ENCODE measurements at regions of chrX and their contacts with region 1.

Region 1: GRCh38 chrX:14039344-14039743 is 9.7 kb upstream of the GEMIN8 start:
- DNase-seq: peak; percentile 47 to 73 (median 51)
- ATAC-seq: peak; percentile 84
- H3K4me3 ChIP-seq: no peak overlapping the region
- H3K27ac ChIP-seq: no peak overlapping the region
- H3K4me1 ChIP-seq: no peaks in the 10 kb centered on the region; a peak in 1 of 5 replicates
- H3K27me3 ChIP-seq: peaks cover 0 to 5% of the 10 kb centered on the region in 2 experiments; a peak in 1 of 5 replicates
- CTCF ChIP-seq: peak; percentile 43 to 78 (median 44); a peak in 5 of 6 replicates
- EP300 ChIP-seq: peak; percentile 93
- POLR2A ChIP-seq: no peak
- RAD21 ChIP-seq: peak; percentile 85 to 94

Region 2: DNA sequence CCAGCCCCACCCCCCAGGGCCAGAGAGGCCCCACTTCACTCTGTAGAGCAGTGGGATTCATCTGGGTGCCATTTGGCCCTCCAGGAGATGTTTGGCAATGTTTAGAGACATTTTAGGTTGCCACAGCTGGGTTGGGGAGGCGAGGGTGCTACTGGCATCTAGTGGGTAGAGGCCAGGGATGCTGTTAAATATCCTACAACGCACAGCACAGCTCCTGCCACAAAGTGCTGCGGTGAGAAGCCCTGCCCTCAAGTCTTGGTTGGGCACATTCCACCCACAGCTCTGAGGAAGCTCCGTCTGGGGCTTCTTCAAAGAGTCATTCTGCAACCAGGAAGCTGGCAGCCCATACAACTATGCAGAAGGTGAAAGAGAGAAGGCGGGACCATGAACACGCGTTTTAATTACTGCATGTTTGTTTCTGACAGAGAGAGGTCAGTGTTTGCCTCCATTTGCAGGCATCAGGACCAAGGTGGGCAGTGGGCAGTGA is 946.8 kb before region 1 on chrX:
- CTCF ChIA-PET with region 1: no interaction called
- POLR2A ChIA-PET with region 1: no interaction called
- in situ Hi-C with region 1: no loop called
- intact Hi-C with region 1: no loop called
- DNase-seq: no peak
- ATAC-seq: peak; percentile 16; the same call in 1 of the 3 replicates
- H3K4me3 ChIP-seq: no peak overlapping the region
- H3K27ac ChIP-seq: no peak overlapping the region
- H3K4me1 ChIP-seq: peaks cover 6 to 19% of the 10 kb centered on the region in 2 experiments; a peak in 3 of 5 replicates
- H3K27me3 ChIP-seq: no peaks in the 10 kb centered on the region
- CTCF ChIP-seq: peak in 1 of 3 experiments; percentile 15; a peak in 1 of 6 replicates
- EP300 ChIP-seq: no peak
- POLR2A ChIP-seq: no peak
- RAD21 ChIP-seq: 0 out of 4 replicates have a peak, but pooled peaks of 1 of the 2 experiments have one; percentile 17

Region 3: GRCh38 chrX:14095702-14096101 is 56.4 kb after region 1 on chrX:
- CTCF ChIA-PET with region 1: no interaction called
- POLR2A ChIA-PET with region 1: no interaction called
- in situ Hi-C with region 1: no loop called
- intact Hi-C with region 1: loop called (anchors 2 kb)
- DNase-seq: peak; percentile 28 to 65 (median 37)
- ATAC-seq: peak; percentile 97
- H3K4me3 ChIP-seq: no peak overlapping the region
- H3K27ac ChIP-seq: no peak overlapping the region
- H3K4me1 ChIP-seq: no peaks in the 10 kb centered on the region; a peak in 1 of 5 replicates
- H3K27me3 ChIP-seq: no peaks in the 10 kb centered on the region; a peak in 1 of 5 replicates
- CTCF ChIP-seq: peak; percentile 64 to 79 (median 76)
- EP300 ChIP-seq: no peak
- POLR2A ChIP-seq: no peak
- RAD21 ChIP-seq: peak; percentile 62 to 79

Region 4: GRCh38 chrX:14528629-14529289 is 489.4 kb after region 1 on chrX:
- CTCF ChIA-PET with region 1: no interaction called
- POLR2A ChIA-PET with region 1: no interaction called
- in situ Hi-C with region 1: no loop called
- intact Hi-C with region 1: loop called (anchors 5 kb)
- DNase-seq: peak; percentile 10 to 42 (median 20)
- ATAC-seq: peak; percentile 54; the same call in 1 of the 3 replicates
- H3K4me3 ChIP-seq: no peak overlapping the region
- H3K27ac ChIP-seq: no peak overlapping the region
- H3K4me1 ChIP-seq: no peaks in the 10 kb centered on the region
- H3K27me3 ChIP-seq: no peaks in the 10 kb centered on the region
- CTCF ChIP-seq: peak; percentile 29 to 44 (median 41); a peak in 5 of 6 replicates
- EP300 ChIP-seq: no peak
- POLR2A ChIP-seq: no peak
- RAD21 ChIP-seq: peak; percentile 47 to 63

Region 5: DNA sequence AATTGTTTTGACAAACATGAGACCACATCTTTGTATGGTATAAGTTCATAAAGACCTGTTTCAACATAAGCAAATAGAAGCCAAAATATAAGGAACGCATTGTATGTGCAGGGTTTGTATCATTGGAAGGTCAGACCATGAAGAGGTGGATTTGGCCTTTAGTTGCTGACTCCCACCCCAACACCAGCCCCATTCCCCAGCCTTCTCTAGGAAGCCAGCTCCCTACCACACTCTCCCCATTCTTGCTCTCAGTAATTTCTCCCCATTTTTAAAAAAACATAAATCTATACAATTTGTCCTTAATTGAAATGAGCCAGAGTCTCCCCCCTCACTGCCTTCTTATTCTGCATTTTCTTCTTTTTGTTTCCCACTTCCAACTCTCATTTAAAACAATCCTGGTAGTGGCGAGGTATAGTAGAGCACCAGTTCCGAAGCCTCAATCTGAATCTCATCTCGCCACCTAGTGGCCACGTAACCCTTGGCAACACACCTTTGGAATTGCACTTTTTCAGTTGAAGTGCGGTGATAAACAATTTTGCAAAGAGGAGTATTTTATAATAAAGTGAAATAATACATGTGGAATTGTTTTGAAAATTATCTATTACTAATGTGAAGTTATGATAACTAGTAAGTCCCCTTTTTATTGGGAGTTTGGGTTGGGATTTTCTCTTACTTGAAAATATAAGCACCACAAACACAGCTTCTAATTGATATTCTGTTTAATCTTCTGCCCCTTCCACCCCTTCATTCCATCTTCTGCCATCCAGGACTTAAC is 1103.9 kb after region 1 on chrX:
- CTCF ChIA-PET with region 1: interaction called, 3 read pairs
- POLR2A ChIA-PET with region 1: no interaction called
- in situ Hi-C with region 1: no loop called
- intact Hi-C with region 1: loop called (anchors 2 kb)
- DNase-seq: peak; percentile 25 to 60 (median 26)
- ATAC-seq: peak; percentile 93
- H3K4me3 ChIP-seq: no peak overlapping the region
- H3K27ac ChIP-seq: no peak overlapping the region
- H3K4me1 ChIP-seq: no peaks in the 10 kb centered on the region
- H3K27me3 ChIP-seq: no peaks in the 10 kb centered on the region
- CTCF ChIP-seq: peak; percentile 58 to 62 (median 60)
- EP300 ChIP-seq: no peak
- POLR2A ChIP-seq: no peak
- RAD21 ChIP-seq: peak; percentile 58 to 63

Region 6: DNA sequence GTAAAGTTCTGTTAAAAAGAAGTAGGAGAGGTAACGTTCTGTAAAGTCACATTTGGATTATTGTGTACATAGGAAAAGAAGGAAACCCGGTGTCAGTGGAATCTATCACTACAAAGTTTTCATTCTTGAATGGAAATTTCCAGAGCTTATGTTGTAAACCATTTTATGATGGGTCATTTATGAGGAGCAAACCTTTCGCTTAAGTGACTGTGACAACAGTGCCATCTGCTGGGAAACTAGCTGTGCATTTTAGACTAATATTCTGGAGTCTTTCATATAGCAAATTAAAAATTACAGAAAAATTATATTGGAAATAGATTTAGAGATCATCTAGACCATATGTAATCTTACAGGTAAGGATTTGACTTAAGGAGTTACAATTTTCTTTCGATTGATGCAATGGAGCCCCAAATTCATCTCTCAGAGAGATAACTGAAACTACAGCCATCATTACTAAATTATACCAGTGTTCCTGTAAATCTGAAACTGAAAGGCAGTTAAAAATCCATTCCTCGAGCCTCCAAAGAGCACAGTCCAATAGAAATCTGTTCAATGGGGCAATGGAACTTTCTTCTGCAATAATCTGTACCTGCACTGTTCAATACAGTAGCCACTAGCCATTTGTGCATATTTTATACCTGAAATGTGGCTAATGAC is 1203.7 kb after region 1 on chrX:
- CTCF ChIA-PET with region 1: interaction called, 9 read pairs
- POLR2A ChIA-PET with region 1: no interaction called
- in situ Hi-C with region 1: loop called (anchors 10 kb)
- intact Hi-C with region 1: loop called (anchors 1 kb)
- DNase-seq: peak; percentile 16 to 62 (median 24)
- ATAC-seq: peak; percentile 75
- H3K4me3 ChIP-seq: no peak overlapping the region
- H3K27ac ChIP-seq: no peak overlapping the region
- H3K4me1 ChIP-seq: no peaks in the 10 kb centered on the region
- H3K27me3 ChIP-seq: no peaks in the 10 kb centered on the region
- CTCF ChIP-seq: peak in 2 of 3 experiments; percentile 52 to 72; a peak in 4 of 6 replicates
- EP300 ChIP-seq: no peak
- POLR2A ChIP-seq: no peak
- RAD21 ChIP-seq: peak; percentile 55 to 75

Measured in K562 (cell line).